ENCODE measurements at regions of chr2 and their contacts with region 1.

Region 1: DNA sequence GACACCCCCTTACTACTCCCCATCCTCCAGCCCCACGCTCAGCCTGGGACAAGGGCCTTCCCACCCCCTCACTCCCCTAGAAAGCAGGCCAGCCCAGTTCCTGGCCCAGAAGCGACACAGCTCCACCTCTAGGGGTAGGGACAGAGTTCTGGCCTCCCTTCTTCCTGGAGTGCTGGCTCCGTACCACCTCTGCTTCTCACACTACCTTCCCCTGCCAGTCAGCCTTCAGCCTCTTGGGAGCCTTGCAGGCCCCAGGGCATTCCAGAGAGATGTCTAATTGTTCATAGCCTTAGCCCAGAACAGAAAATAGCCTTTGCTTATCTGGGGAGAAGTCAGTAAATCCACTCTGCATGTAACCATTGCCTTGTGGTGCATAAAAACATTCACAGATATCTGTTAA is 13.1 kb upstream of the CATIP start:
- DNase-seq: no peak
- H3K4me3 ChIP-seq: no peak overlapping the region
- H3K27ac ChIP-seq: no peak overlapping the region
- H3K4me1 ChIP-seq: no peaks in the 10 kb centered on the region
- H3K27me3 ChIP-seq: no peaks in the 10 kb centered on the region
- CTCF ChIP-seq: no peak
- EP300 ChIP-seq: no peak
- RAD21 ChIP-seq: no peak

Region 2: DNA sequence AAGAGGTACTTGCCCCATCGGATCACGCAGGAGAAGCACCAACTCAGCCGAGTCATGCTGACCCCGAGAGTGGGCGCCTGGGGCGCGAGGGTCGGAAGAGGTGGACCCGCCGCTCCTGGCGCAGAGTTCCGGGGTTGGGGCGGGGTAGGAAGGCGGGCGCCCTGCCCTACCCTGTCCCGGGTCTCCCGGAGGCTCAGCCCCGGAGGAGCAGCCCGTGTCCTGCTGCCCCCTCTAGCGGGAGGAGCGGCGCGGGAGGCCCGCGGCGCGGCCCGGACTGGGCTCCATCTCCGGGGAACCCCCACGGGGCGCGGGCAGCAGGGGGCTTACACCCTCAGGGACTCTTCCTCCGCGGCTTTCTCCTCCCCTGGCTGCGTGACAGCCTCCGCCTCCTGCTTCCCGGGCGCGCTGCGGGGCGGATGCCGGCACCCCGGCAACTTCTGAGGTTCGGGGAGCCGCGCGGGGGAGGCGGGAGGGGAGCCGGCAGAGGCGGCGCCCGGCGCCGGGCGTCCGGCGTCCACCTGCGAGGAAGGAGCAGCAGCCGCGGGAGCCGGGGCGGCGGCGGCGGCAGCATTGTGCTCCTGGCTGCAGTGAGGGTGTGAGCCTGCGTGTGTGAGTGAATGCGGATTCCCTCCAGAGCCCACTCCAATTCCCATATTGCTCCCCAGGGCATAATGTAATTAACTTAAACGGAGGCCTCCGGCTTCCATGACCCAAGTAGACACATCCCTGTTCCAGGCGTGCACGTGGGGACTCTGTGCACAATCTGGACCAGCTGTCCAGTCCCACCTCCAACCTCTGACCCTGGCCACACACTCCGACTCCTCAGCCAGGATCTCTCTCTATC is 333.2 kb before region 1 on chr2:
- CTCF ChIA-PET with region 1: no interaction called
- POLR2A ChIA-PET with region 1: no interaction called
- DNase-seq: peak; percentile 91
- H3K4me3 ChIP-seq: peak overlapping the region; percentile 76 to 95
- H3K27ac ChIP-seq: peak overlapping the region in 1 of 2 experiments; percentile 72; a peak in 3 of 4 replicates
- H3K4me1 ChIP-seq: peaks cover 51 to 69% of the 10 kb centered on the region in 2 experiments
- H3K27me3 ChIP-seq: no peaks in the 10 kb centered on the region
- CTCF ChIP-seq: peak; percentile 63
- EP300 ChIP-seq: no peak
- RAD21 ChIP-seq: peak; percentile 53

Region 3: GRCh38 chr2:218360447-218360846 is 16.9 kb after region 1 on chr2:
- CTCF ChIA-PET with region 1: interaction called, 19 read pairs
- POLR2A ChIA-PET with region 1: interaction called, 3 read pairs
- DNase-seq: no peak
- H3K4me3 ChIP-seq: no peak overlapping the region
- H3K27ac ChIP-seq: no peak overlapping the region
- H3K4me1 ChIP-seq: peaks cover 0 to 4% of the 10 kb centered on the region in 2 experiments; a peak in 1 of 4 replicates
- H3K27me3 ChIP-seq: no peaks in the 10 kb centered on the region
- CTCF ChIP-seq: no peak
- EP300 ChIP-seq: no peak
- RAD21 ChIP-seq: no peak

Region 4: DNA sequence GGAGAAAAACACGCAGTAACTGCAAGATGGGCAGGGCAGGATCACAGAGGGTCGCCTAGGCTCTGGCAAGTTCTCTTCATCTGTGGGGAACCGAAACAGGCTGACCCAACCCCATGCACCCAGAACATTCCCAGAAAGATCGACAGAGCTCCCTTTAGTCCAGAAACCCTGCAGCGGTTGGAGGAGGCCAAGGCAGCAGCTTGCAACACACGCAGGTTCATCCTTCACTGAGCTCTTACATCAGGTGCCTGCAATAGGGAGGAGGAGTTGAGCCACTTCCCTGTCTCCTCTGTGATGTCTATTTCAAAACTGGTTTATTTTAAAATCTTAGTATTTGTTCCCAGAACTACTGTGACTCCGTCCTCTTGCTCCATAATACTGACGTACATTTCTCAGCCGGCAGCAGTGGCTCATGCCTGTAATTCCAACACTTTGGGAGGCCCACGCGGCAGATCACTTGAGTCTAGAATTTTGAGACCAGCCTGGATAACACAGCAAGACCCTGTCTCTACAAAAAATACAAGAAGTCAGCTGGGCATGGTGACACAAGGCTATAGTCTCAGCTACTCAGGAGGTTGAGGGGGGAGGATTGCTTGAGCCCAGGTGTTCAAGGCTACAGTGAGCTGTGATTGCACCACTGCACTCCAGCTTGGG is 26.9 kb after region 1 on chr2:
- CTCF ChIA-PET with region 1: no interaction called
- POLR2A ChIA-PET with region 1: no interaction called
- DNase-seq: no peak
- H3K4me3 ChIP-seq: no peak overlapping the region
- H3K27ac ChIP-seq: no peak overlapping the region
- H3K4me1 ChIP-seq: no peaks in the 10 kb centered on the region
- H3K27me3 ChIP-seq: no peaks in the 10 kb centered on the region
- CTCF ChIP-seq: no peak
- EP300 ChIP-seq: no peak
- RAD21 ChIP-seq: no peak